ENCODE measurements at regions of chr9 and their contacts with region 1.

Region 1: GRCh38 chr9:125758986-125759763 is 12.0 kb downstream of the PBX3 start:
- ATAC-seq: peak in 6 of 8 experiments; percentile 12 to 77 (median 50)
- H3K4me3 ChIP-seq: peak overlapping the region; percentile 12 to 31 (median 17)
- H3K27ac ChIP-seq: no peak overlapping the region
- H3K4me1 ChIP-seq: peaks cover 66 to 97% of the 10 kb centered on the region in 2 donors

Region 2: DNA sequence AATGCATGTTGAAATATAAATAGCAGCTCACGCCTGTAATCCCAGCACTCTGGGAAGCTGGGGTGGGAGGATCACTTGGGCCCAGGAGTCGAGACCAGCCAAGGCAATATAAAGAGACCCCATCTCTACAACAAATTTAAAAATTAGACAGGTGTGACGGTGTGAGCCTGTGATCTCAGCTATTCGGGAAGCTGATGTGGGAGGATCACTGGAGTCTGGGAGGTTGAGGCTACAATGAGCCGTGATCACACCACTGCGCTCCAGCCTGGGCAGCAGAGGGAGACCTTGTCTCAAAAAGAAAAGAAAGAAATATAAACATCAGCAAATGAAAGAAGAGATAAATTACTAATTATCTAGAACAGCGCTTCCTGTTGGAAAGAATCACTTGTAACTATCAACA is 157.2 kb before region 1 on chr9:
- in situ Hi-C with region 1: no loop called
- ATAC-seq: peak in 3 of 8 experiments; percentile 14 to 49 (median 44)
- H3K4me3 ChIP-seq: no peak overlapping the region
- H3K27ac ChIP-seq: no peak overlapping the region
- H3K4me1 ChIP-seq: peaks cover 13 to 34% of the 10 kb centered on the region in 2 donors

Region 3: DNA sequence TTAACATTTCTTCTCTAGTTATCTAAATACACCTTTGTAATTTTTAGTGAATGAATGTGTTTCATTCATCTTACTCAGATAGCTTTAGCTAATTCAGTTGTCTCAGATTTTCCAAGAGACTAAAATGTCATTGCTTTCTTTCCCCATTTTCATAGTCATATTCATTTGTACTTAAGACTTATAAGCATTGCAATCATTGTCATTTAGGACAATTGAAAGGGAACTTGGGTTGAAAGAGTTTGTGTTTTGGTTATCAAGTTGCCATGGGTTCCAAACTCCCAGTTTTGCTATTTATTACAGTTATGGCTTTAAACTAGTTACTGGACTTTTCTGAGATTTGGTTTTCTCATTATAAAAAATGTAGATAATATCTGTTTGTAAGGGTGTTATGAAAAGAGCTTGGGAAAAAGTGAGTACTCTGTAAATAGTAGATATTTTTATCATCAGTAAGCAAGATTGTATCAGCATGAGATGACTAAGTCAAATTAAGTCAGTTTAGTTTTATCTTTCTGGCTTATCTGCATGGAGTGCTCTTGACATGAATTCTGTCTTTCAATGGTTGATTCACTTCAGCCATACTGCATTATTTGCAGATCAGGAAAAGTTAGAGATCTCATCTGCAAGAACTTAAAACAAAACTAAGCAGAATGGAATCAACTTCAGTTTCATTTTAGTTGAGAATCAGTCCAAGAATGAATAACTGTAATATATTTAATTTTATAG is 95.5 kb after region 1 on chr9:
- in situ Hi-C with region 1: loop called in 1 of 9 experiments (anchors 25 kb)
- ATAC-seq: no peak
- H3K4me3 ChIP-seq: no peak overlapping the region
- H3K27ac ChIP-seq: no peak overlapping the region
- H3K4me1 ChIP-seq: peaks cover 12 to 47% of the 10 kb centered on the region in 2 donors

Region 4: GRCh38 chr9:125904155-125904851 is 145.1 kb after region 1 on chr9:
- in situ Hi-C with region 1: loop called in 1 of 9 experiments (anchors 25 kb)
- ATAC-seq: peak in 5 of 8 experiments; percentile 74 to 90 (median 79)
- H3K4me3 ChIP-seq: peak overlapping the region in 2 of 5 donors; percentile 6 to 16
- H3K27ac ChIP-seq: peak overlapping the region in 1 of 2 donors; percentile 19
- H3K4me1 ChIP-seq: peaks cover 51 to 97% of the 10 kb centered on the region in 2 donors

Region 5: DNA sequence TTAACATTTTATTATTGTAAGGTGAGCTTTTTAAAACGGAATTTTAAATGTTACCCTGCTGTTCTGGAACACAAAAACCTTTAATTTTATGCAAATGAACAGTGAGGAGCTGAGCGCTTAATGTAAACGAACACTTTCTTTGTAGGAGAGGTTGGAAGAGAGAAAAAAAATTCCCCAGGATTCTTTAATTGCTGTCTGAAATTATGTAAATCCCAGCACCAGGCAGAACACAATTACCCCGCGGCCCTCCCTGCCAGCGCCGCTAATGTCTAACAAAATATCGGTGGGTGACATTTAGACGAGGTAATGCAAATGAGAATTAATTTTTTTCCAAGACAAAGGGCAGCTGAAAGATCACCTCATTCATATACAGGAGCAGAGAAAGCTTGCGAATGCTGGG is 424.1 kb after region 1 on chr9:
- in situ Hi-C with region 1: no loop called
- ATAC-seq: no peak
- H3K4me3 ChIP-seq: no peak overlapping the region
- H3K27ac ChIP-seq: no peak overlapping the region
- H3K4me1 ChIP-seq: no peaks in the 10 kb centered on the region